ENCODE measurements at regions of chr10 and their contacts with region 1.

Region 1: GRCh38 chr10:511101-511848 is 178.2 kb downstream of the DIP2C start:
- DNase-seq: peak; percentile 91
- H3K4me3 ChIP-seq: peak overlapping the region in 1 of 2 experiments; percentile 14; a peak in 1 of 4 replicates
- H3K27ac ChIP-seq: peak overlapping the region; percentile 43 to 49; a peak in 3 of 4 replicates
- H3K4me1 ChIP-seq: peaks cover 0 to 8% of the 10 kb centered on the region in 2 experiments; a peak in 1 of 4 replicates
- H3K27me3 ChIP-seq: no peaks in the 10 kb centered on the region
- CTCF ChIP-seq: peak; percentile 97
- EP300 ChIP-seq: no peak
- RAD21 ChIP-seq: peak; percentile 97

Region 2: DNA sequence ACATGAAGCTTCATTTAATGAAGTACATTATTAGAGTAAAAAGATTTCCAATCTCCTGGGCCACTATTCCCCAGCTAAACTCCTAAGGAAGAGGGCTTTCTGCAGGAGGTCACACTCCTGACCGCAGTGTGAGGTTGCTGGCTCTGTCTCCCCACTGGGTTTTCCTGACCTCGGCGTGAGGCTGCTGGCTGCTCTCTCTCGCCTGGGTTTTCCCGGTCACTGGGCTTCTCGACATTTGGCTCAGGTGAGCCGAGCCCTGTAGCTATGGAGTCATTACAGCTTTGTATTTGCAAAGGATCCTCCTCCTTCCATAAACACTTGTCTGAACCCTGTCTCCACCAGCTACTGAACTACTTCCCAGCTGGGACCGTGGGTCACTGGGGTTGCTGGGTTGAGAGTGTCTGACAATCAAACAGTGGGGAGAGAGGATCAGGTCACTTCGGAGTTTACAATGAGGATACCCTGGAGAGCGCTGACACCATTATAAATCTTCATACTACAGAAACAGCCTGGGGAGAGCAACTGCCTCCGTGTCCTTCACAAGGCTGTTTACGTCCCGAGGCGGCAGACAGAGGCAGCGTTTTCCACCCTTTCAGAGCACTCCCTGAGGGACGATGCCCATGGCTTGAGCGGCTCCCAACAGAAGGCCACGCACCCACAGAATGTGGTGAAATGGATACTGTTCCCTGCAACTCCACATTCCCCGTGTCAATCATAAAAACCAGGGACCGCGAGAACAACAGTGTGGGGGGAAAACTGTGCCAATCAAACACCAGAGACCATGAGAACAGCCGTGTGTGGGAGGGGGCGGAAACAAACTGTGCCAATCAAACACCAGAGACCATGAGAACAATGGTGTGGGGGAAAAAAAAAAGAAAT is 149.8 kb before region 1 on chr10:
- CTCF ChIA-PET with region 1: no interaction called
- POLR2A ChIA-PET with region 1: no interaction called
- DNase-seq: no peak
- H3K4me3 ChIP-seq: no peak overlapping the region
- H3K27ac ChIP-seq: no peak overlapping the region
- H3K4me1 ChIP-seq: no peaks in the 10 kb centered on the region
- H3K27me3 ChIP-seq: no peaks in the 10 kb centered on the region
- CTCF ChIP-seq: no peak
- EP300 ChIP-seq: no peak
- RAD21 ChIP-seq: no peak

Region 3: GRCh38 chr10:498760-499435 is 12.4 kb before region 1 on chr10:
- CTCF ChIA-PET with region 1: interaction called, 14 read pairs
- POLR2A ChIA-PET with region 1: no interaction called
- DNase-seq: no peak
- H3K4me3 ChIP-seq: no peak overlapping the region
- H3K27ac ChIP-seq: no peak overlapping the region
- H3K4me1 ChIP-seq: peaks cover 9 to 11% of the 10 kb centered on the region in 2 experiments; a peak in 3 of 4 replicates
- H3K27me3 ChIP-seq: no peaks in the 10 kb centered on the region
- CTCF ChIP-seq: no peak
- EP300 ChIP-seq: no peak
- RAD21 ChIP-seq: no peak

Measured in SK-N-SH (cell line).